Aorta (tissue), 5 donors: ENCODE measurements at regions of chr2 and their contacts with region 1.

Region 1: DNA sequence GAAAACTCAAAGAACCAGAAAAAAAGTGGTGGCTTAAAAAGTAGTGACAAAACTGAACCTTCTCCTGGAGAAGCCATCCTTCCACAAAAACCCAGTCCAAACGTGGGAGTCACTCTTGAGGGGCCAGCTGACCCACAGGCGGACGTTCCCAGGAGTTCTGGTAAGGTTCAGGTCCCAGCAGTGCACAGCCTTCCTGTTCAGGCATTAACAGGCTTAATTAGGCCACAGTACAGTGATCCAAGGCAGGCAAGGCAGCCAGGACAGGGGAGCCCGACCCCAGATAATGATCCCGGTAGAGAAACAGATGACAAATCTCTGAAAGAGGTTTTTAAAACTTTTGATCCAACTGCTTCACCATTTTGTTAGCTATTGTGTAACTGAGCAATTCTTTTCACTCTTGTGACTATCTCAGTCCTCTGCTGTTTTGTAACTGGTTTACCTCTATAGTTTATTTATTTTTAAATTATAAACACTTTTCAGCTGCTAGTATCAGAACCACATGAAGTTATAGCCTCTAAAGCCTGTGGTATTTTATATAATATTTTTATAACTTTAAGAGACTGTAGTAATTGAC is 56.8 kb downstream of the ZC3H6 start:
- DNase-seq: no peak
- ATAC-seq: no peak
- H3K4me3 ChIP-seq: no peak overlapping the region
- H3K27ac ChIP-seq: no peak overlapping the region
- H3K4me1 ChIP-seq: no peaks in the 10 kb centered on the region
- H3K27me3 ChIP-seq: no peaks in the 10 kb centered on the region

Region 2: DNA sequence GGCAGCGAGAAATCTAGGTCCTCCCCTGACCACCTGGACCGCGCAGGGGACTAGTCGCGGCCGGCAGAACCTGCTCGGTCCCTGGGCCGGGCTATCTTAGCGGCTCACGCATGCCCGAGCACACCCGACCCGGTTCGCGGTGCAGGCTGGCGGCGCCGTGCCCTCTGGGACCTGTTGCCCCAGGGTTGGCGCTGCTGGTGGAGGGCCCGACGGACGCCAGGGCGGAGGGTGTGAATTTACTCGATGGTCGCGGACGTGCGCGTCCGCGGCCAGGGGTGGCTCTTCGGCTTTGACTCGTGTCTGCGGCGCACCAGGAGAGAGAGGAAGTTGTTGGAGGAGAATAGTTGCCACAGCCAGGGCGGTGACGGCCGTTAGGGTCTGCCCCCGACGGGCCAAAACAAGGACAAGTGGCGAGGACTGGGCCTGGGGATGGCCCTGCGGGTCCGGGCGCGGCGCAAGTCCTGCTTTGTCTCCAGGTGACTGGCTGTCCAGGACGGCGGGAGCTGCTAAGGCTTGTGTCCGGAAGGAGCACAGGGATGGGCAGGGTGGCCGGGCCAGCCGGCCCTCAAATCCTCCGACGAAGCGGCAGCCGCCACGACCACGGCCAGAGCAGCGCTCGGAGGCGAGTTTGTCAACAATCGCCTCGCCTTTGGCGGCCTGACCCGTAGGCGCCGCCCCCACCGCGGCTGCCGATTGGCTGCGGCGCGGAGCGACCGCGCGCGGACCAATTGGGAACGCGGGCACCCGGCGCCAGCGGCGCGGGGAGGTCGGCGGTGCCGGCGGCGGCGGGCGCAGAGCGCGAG is 1210.2 kb before region 1 on chr2:
- intact Hi-C with region 1: no loop called
- DNase-seq: peak; percentile 92 to 95
- ATAC-seq: peak; percentile 88
- H3K4me3 ChIP-seq: peak overlapping the region; percentile 44 to 50
- H3K27ac ChIP-seq: no peak overlapping the region
- H3K4me1 ChIP-seq: no peaks in the 10 kb centered on the region
- H3K27me3 ChIP-seq: peaks cover 0 to 2% of the 10 kb centered on the region in 2 donors

Region 3: DNA sequence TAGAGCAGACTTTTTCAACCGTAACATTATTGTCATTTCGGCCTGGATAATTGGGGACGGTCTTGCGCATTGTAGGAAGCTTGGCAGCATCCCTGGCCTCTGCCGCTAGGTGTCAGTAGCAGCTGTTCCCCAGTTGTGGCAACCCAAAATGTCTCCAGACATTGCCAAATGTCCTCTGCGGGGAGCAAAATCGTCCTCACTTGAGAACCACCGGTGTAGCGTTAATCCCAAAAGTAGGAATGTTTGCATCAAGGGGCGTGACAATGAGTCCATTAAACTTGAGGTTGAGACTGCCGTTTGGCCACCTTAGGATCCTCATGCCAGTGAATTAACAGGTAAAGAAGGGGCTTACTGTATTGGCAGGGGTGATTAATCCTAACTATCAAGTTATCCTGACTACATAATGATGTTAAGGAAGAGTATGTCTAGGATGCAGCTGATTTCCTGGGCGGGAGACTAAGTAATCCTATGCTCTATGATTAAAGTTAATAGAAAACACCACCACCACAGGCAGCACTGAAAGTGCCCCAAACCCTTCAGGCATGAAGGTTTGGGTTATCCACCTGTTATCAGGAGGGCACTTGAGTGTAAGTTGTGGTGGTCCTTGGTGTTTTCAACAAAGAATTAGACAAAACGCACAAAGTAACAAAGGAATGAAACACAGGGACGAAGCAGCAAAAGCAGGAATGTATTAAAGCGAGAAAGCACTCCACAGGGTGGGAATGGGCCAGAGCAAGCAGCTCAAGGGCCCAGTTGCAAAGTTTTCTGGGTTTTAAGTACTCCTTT is 72.5 kb before region 1 on chr2:
- intact Hi-C with region 1: loop called in 1 of 2 experiments (anchors 5 kb)
- DNase-seq: peak; percentile 91 to 93
- ATAC-seq: peak; percentile 91
- H3K4me3 ChIP-seq: no peak overlapping the region
- H3K27ac ChIP-seq: no peak overlapping the region
- H3K4me1 ChIP-seq: no peaks in the 10 kb centered on the region
- H3K27me3 ChIP-seq: no peaks in the 10 kb centered on the region